Naive thymus-derived CD4-positive, alpha-beta T cell (primary cell): ENCODE measurements at regions of chr16 and their contacts with region 1.

Region 1: GRCh38 chr16:56643080-56643778 is 4.8 kb downstream of the MT1A start:
- DNase-seq: peak; percentile 42 to 79 (median 57)
- ATAC-seq: peak; percentile 99
- H3K4me3 ChIP-seq: peak overlapping the region; percentile 48
- H3K4me3 Mint-ChIP-seq: peak overlapping the region; percentile 60 to 84 (median 80)
- H3K27ac ChIP-seq: peak overlapping the region; percentile 40
- H3K27ac Mint-ChIP-seq: peak overlapping the region in 5 of 9 donors; percentile 37 to 67 (median 54)
- H3K4me1 ChIP-seq: peaks cover 11 to 16% of the 10 kb centered on the region in 2 donors
- H3K4me1 Mint-ChIP-seq: peaks cover 15 to 31% (median 25%) of the 10 kb centered on the region in 7 donors
- H3K27me3 ChIP-seq: peaks cover 0 to 4% of the 10 kb centered on the region in 2 donors
- H3K27me3 Mint-ChIP-seq: peaks cover 28 to 84% (median 34%) of the 10 kb centered on the region in 5 donors

Region 2: GRCh38 chr16:56513972-56514371 is 129.3 kb before region 1 on chr16:
- CTCF ChIA-PET with region 1: no interaction called
- POLR2A ChIA-PET with region 1: interaction called, 3 read pairs
- intact Hi-C with region 1: loop called in 1 of 2 experiments (anchors 1 kb)
- DNase-seq: peak in 7 of 9 donors; percentile 37 to 64 (median 56)
- ATAC-seq: peak; percentile 92
- H3K4me3 ChIP-seq: no peak overlapping the region
- H3K4me3 Mint-ChIP-seq: peak overlapping the region in 2 of 10 donors; percentile 3 to 6
- H3K27ac ChIP-seq: no peak overlapping the region
- H3K27ac Mint-ChIP-seq: peak overlapping the region in 1 of 9 donors; percentile 39
- H3K4me1 ChIP-seq: peaks cover 0 to 19% of the 10 kb centered on the region in 2 donors
- H3K4me1 Mint-ChIP-seq: peaks cover 10 to 77% (median 64%) of the 10 kb centered on the region in 7 donors
- H3K27me3 ChIP-seq: no peaks in the 10 kb centered on the region
- H3K27me3 Mint-ChIP-seq: no peaks in the 10 kb centered on the region

Region 3: GRCh38 chr16:56600398-56600999 is 42.7 kb before region 1 on chr16:
- CTCF ChIA-PET with region 1: interaction called, 6 read pairs
- POLR2A ChIA-PET with region 1: no interaction called
- intact Hi-C with region 1: loop called in 1 of 2 experiments (anchors 1 kb)
- DNase-seq: peak in 1 of 9 donors; percentile 13
- ATAC-seq: peak; percentile 67
- H3K4me3 ChIP-seq: no peak overlapping the region
- H3K4me3 Mint-ChIP-seq: no peak overlapping the region
- H3K27ac ChIP-seq: no peak overlapping the region
- H3K27ac Mint-ChIP-seq: peak overlapping the region in 1 of 9 donors; percentile 7
- H3K4me1 ChIP-seq: no peaks in the 10 kb centered on the region
- H3K4me1 Mint-ChIP-seq: peaks cover 0 to 13% (median 5%) of the 10 kb centered on the region in 7 donors
- H3K27me3 ChIP-seq: no peaks in the 10 kb centered on the region
- H3K27me3 Mint-ChIP-seq: peaks cover 0 to 36% (median 3%) of the 10 kb centered on the region in 5 donors

Region 4: DNA sequence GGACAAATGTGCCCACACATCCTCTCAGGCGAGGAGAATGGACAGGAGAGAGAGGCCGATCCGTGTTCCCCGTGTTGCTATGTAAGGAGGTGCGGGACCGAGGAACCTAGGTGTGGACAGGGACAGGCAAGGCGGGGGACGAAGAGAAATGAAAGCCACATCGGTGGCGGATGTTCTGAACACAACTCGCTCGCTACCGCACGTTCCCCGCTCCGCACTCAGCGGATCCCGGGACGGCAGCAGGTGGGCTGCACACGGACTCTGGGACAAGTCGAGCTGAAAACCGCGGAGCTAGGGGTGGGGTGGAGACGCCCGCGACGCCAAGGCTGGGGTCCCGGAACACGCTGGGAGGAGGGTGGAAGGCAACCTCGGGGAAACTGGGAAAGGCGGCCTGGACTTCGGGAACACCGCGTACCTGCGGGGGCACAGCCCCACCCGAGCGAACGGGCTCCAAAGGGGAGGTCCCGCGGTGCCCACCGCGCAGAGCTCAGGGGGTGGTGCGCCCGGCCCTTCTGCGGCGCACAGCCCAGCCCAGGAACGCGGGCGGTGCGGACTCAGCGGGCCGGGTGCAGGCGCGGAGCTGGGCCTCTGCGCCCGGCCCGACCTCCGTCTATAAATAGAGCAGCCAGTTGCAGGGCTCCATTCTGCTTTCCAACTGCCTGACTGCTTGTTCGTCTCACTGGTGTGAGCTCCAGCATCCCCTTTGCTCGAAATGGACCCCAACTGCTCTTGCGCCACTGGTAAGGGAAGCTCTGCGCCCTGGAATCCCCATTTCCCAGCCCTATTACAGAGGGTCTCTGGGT is 17.9 kb before region 1 on chr16 and contains the start of gene MT1E:
- CTCF ChIA-PET with region 1: interaction called, 3 read pairs
- POLR2A ChIA-PET with region 1: interaction called, 4 read pairs
- intact Hi-C with region 1: loop called (anchors 2 kb)
- DNase-seq: peak in 7 of 9 donors; percentile 19 to 76 (median 41)
- ATAC-seq: peak; percentile 89
- H3K4me3 ChIP-seq: peak within 1 kb of the TSS; percentile 54
- H3K4me3 Mint-ChIP-seq: peak within 1 kb of the TSS; percentile 76 to 98 (median 90)
- H3K27ac ChIP-seq: peak within 1 kb of the TSS; percentile 15
- H3K27ac Mint-ChIP-seq: peak within 1 kb of the TSS; percentile 61 to 95 (median 82)
- H3K4me1 ChIP-seq: peaks cover 0 to 13% of the 10 kb centered on the region in 2 donors
- H3K4me1 Mint-ChIP-seq: peaks cover 11 to 27% (median 15%) of the 10 kb centered on the region in 7 donors
- H3K27me3 ChIP-seq: no peaks in the 10 kb centered on the region
- H3K27me3 Mint-ChIP-seq: peaks cover 6 to 13% (median 12%) of the 10 kb centered on the region in 5 donors
- total RNA-seq, gene MT1E: 0.45 to 166 (median 2.5) TPM in 4 of 5 experiments, not detected in the other

Region 5: GRCh38 chr16:56657555-56658326 is 14.5 kb after region 1 on chr16 and contains the start of gene MT1F:
- CTCF ChIA-PET with region 1: interaction called, 7 read pairs
- POLR2A ChIA-PET with region 1: interaction called, 5 read pairs
- intact Hi-C with region 1: loop called (anchors 1 to 2 kb)
- DNase-seq: peak in 8 of 9 donors; percentile 35 to 66 (median 56)
- ATAC-seq: peak; percentile 80
- H3K4me3 ChIP-seq: peak within 1 kb of the TSS; percentile 91
- H3K4me3 Mint-ChIP-seq: peak within 1 kb of the TSS; percentile 79 to 99 (median 94)
- H3K27ac ChIP-seq: peak within 1 kb of the TSS; percentile 64
- H3K27ac Mint-ChIP-seq: peak within 1 kb of the TSS; percentile 67 to 97 (median 94)
- H3K4me1 ChIP-seq: peaks cover 7 to 12% of the 10 kb centered on the region in 2 donors
- H3K4me1 Mint-ChIP-seq: peaks cover 14 to 46% (median 27%) of the 10 kb centered on the region in 7 donors
- H3K27me3 ChIP-seq: no peaks in the 10 kb centered on the region
- H3K27me3 Mint-ChIP-seq: peaks cover 0 to 21% (median 0%) of the 10 kb centered on the region in 5 donors
- total RNA-seq, gene MT1F: 5.6 to 20.6 (median 8.7) TPM